Heart left ventricle (tissue), 16 donors: ENCODE measurements at regions of chr1 and their contacts with region 1.

Region 1: GRCh38 chr1:170881268-170882265 is 53.8 kb upstream of the MROH9 start:
- DNase-seq: peak in 1 of 5 donors; percentile 17
- ATAC-seq: peak in 2 of 4 donors; percentile 65 to 80
- H3K4me3 ChIP-seq: peak overlapping the region in 7 of 12 donors; percentile 3 to 44 (median 22)
- H3K27ac ChIP-seq: no peak overlapping the region
- H3K4me1 ChIP-seq: peaks cover 0 to 10% (median 0%) of the 10 kb centered on the region in 12 donors
- H3K27me3 ChIP-seq: no peaks in the 10 kb centered on the region
- CTCF ChIP-seq: peak; percentile 20 to 74 (median 65)
- POLR2A ChIP-seq: no peak

Region 2: GRCh38 chr1:169933984-169934725 is 947.4 kb before region 1 on chr1:
- intact Hi-C with region 1: loop called in 7 of 10 experiments (anchors 2 to 10 kb)
- DNase-seq: no peak
- ATAC-seq: no peak
- H3K4me3 ChIP-seq: no peak overlapping the region
- H3K27ac ChIP-seq: no peak overlapping the region
- H3K4me1 ChIP-seq: peaks cover 0 to 8% (median 0%) of the 10 kb centered on the region in 12 donors
- H3K27me3 ChIP-seq: no peaks in the 10 kb centered on the region
- CTCF ChIP-seq: no peak
- POLR2A ChIP-seq: no peak

Region 3: GRCh38 chr1:170010443-170010842 is 871.1 kb before region 1 on chr1:
- intact Hi-C with region 1: loop called in 3 of 10 experiments (anchors 10 kb)
- DNase-seq: peak in 4 of 5 donors; percentile 25 to 40 (median 32)
- ATAC-seq: no peak
- H3K4me3 ChIP-seq: no peak overlapping the region
- H3K27ac ChIP-seq: no peak overlapping the region
- H3K4me1 ChIP-seq: no peaks in the 10 kb centered on the region
- H3K27me3 ChIP-seq: no peaks in the 10 kb centered on the region
- CTCF ChIP-seq: peak; percentile 7 to 66 (median 50)
- POLR2A ChIP-seq: no peak

Region 4: DNA sequence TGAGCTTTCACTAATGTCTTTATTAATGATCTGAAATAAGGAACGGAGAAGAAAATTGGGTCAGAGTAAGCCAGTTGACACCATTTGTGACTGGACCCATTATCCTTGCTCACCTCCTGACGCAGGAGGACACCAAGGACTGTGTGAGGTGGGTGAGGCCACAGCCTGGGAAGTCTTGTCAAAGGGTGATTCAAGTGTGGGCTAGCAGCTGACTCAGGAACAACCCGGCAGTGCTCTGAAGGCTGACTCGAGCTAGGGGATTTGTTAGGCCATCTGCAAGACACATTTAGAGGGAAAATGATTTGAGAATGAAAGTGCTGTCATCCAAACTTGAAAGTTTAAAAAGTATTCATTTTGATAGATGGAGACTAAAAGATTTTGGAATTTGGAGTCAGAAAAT is 196.4 kb before region 1 on chr1:
- intact Hi-C with region 1: loop called in 1 of 10 experiments (anchors 5 kb)
- DNase-seq: no peak
- ATAC-seq: peak in 2 of 4 donors; percentile 34 to 66
- H3K4me3 ChIP-seq: no peak overlapping the region
- H3K27ac ChIP-seq: peak overlapping the region in 1 of 12 donors; percentile 13
- H3K4me1 ChIP-seq: peaks cover 0 to 53% (median 11%) of the 10 kb centered on the region in 12 donors
- H3K27me3 ChIP-seq: no peaks in the 10 kb centered on the region
- CTCF ChIP-seq: no peak
- POLR2A ChIP-seq: no peak

Region 5: GRCh38 chr1:170790175-170790574 is 91.4 kb before region 1 on chr1:
- intact Hi-C with region 1: loop called in 1 of 10 experiments (anchors 10 kb)
- DNase-seq: no peak
- ATAC-seq: no peak
- H3K4me3 ChIP-seq: no peak overlapping the region
- H3K27ac ChIP-seq: peak overlapping the region in 1 of 12 donors; percentile 1
- H3K4me1 ChIP-seq: peaks cover 0 to 9% (median 0%) of the 10 kb centered on the region in 12 donors
- H3K27me3 ChIP-seq: no peaks in the 10 kb centered on the region
- CTCF ChIP-seq: peak in 1 of 12 donors; percentile 26
- POLR2A ChIP-seq: no peak